Dorsolateral prefrontal cortex (tissue), 120 donors: ENCODE measurements at regions of chr7 and their contacts with region 1.

Region 1: DNA sequence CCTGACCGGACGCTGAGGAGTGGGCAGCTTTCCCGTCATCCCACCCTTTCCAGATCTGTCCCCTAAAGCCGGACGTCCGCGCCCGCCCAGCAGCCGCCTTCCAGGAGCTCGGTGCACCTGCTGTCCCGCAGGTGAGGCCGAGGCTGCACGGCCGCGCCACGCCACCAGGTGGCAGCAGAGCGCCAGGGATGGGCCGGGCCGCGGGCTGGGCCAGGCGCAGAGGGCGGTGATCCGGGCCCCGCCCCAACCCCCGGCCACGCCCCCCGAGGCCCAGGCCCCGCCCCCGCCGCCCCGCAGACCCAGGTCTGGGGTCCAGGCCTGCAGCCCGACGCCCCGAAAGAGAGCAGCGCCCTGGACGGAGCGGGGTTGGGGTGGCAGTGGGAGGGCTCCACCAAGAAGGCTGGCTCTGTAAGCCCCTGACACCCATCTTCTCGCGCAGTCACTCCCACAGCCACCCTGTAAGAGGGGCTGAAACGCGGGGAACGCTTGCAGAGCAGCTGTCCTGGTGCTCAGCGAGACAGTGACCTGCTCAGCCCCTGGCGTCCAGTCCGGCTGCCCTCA is 32.2 kb downstream of the FOXL3 start:
- DNase-seq: peak in 8 of 10 donors; percentile 57 to 87 (median 70)
- H3K4me3 ChIP-seq: peak overlapping the region in 22 of 59 donors; percentile 2 to 48 (median 29)
- H3K27ac ChIP-seq: no peak overlapping the region
- H3K27me3 ChIP-seq: peaks cover 0 to 29% (median 0%) of the 10 kb centered on the region in 45 donors
- CTCF ChIP-seq: peak; percentile 67 to 100 (median 96)

Region 2: GRCh38 chr7:284762-285722 is 37.1 kb before region 1 on chr7:
- intact Hi-C with region 1: no loop called
- DNase-seq: peak in 3 of 10 donors; percentile 17 to 36 (median 29)
- H3K4me3 ChIP-seq: no peak overlapping the region
- H3K27ac ChIP-seq: no peak overlapping the region
- H3K27me3 ChIP-seq: peaks cover 0 to 25% (median 13%) of the 10 kb centered on the region in 45 donors
- CTCF ChIP-seq: no peak

Region 3: DNA sequence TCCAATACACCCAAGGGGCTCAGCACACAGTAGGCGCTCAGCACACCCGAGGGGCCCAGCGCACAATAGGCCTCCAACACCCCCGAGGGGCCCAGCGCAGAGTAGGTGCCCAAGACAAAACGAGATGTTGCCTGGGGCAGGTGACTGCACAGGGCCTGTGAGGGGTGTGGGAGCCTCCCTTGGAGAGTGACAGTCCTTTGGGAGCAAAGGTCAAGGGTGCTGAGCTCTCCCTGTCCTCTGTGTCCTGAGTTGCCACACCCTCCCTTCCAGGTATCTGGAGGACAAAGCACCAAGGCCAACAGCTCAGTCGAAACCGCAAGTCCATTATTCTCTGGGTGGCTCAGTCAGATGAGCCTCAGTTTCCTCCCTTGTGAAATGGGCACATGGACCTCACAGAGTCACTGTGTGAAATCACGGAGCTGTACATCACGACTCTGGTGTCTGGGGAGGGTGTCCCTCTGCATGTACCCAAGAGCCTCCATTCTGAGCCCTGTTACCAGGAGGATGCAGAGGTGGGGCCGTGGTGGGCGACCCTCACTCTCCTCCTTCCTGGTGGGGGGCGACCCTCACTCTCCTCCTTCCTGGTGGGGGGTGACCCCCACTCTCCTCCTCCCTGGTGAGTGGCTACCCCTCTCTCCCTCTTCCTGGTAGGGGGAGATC is 49.1 kb after region 1 on chr7:
- intact Hi-C with region 1: no loop called
- DNase-seq: peak in 4 of 10 donors; percentile 14 to 27 (median 26)
- H3K4me3 ChIP-seq: no peak overlapping the region
- H3K27ac ChIP-seq: no peak overlapping the region
- H3K27me3 ChIP-seq: peaks cover 0 to 8% (median 0%) of the 10 kb centered on the region in 45 donors
- CTCF ChIP-seq: no peak

Region 4: DNA sequence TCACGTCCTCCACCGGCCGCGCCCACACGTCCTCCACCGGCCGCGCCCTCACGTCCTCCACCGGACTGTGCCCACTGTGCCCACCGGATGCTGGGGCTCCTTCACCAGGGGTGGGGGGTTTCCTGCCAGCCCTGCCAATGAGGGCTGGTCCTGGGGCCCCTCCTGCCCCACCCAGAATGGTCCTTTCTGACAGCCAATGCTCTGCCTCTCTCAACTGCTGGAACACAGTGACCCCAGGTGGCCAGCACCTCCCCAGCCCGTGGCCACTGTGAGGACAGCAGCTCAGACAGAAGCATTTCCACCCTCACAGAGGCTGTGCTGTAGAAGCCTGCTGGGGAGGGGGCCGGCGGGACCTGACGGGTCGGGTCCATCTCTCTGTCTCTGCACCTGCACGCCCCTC is 314.2 kb after region 1 on chr7:
- intact Hi-C with region 1: loop called (anchors 1 to 5 kb)
- DNase-seq: peak in 6 of 10 donors; percentile 49 to 70 (median 55)
- H3K4me3 ChIP-seq: peak overlapping the region in 1 of 59 donors; percentile 16
- H3K27ac ChIP-seq: no peak overlapping the region
- H3K27me3 ChIP-seq: no peaks in the 10 kb centered on the region
- CTCF ChIP-seq: peak in 54 of 56 donors; percentile 17 to 71 (median 56)

Region 5: GRCh38 chr7:768881-769504 is 446.8 kb after region 1 on chr7:
- intact Hi-C with region 1: loop called (anchors 1 to 2 kb)
- DNase-seq: peak in 6 of 10 donors; percentile 28 to 82 (median 51)
- H3K4me3 ChIP-seq: peak overlapping the region in 49 of 59 donors; percentile 7 to 52 (median 34)
- H3K27ac ChIP-seq: peak overlapping the region in 42 of 59 donors; percentile 4 to 83 (median 58)
- H3K27me3 ChIP-seq: no peaks in the 10 kb centered on the region
- CTCF ChIP-seq: no peak

Region 6: DNA sequence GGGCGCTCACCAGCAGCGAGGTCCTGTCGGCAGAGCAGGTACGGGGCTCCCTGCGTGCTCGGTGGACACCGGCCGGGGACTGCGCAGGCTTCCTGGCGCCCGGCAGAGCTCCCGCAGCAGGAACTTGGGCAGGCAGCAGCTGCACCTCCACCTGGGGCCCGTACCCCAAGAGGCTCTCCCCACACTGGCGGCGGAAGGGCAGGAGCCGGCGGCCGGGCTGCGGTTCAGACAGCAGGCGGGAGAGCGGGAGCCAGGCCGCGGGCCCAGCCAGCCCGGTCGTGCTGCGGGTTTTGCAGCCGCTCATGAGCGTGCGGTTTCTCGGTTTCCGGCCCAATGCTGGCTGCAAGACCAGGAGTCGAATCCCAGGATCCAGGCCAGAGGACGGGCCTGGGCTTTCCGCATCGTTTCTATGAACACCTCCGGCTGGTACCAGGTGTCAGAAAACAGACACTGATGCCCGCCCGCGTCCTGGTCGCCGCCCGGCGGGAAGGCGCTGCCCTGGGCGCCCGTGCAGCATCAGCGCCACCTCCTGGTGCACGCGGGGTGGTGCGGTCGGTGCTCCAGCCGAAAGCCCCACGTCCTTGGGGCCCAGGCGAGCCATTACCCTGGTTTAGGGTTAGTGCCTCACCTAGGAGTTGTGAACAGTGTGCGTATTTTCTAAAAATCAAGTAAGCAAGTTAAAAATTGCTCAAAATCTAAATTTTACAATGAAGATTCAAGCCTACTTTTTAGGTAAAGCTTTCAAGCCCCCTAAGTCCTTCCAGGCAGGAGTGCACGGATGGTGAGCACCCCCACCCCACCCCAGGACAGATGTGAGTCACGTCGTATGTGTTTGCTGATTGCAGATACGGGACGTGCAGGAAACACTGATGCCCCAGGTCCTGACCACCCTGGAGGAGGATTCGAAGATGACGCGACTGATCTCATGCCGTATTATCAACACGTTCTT is 452.2 kb after region 1 on chr7:
- intact Hi-C with region 1: loop called (anchors 1 to 2 kb)
- DNase-seq: peak in 9 of 10 donors; percentile 49 to 87 (median 60)
- H3K4me3 ChIP-seq: peak overlapping the region in 10 of 59 donors; percentile 10 to 36 (median 20)
- H3K27ac ChIP-seq: peak overlapping the region in 7 of 59 donors; percentile 20 to 83 (median 29)
- H3K27me3 ChIP-seq: no peaks in the 10 kb centered on the region
- CTCF ChIP-seq: peak; percentile 62 to 97 (median 90)

Region 7: GRCh38 chr7:876167-876967 is 554.2 kb after region 1 on chr7 and contains the start of gene GET4:
- intact Hi-C with region 1: loop called (anchors 2 kb)
- DNase-seq: peak; percentile 97 to 100 (median 98)
- H3K4me3 ChIP-seq: peak within 1 kb of the TSS; percentile 50 to 92 (median 80)
- H3K27ac ChIP-seq: peak within 1 kb of the TSS; percentile 74 to 97 (median 93)
- H3K27me3 ChIP-seq: no peaks in the 10 kb centered on the region
- CTCF ChIP-seq: peak in 47 of 56 donors; percentile 0 to 65 (median 47)
- total RNA-seq, gene GET4: 25.4 to 54.1 (median 40.7) TPM

Region 8: DNA sequence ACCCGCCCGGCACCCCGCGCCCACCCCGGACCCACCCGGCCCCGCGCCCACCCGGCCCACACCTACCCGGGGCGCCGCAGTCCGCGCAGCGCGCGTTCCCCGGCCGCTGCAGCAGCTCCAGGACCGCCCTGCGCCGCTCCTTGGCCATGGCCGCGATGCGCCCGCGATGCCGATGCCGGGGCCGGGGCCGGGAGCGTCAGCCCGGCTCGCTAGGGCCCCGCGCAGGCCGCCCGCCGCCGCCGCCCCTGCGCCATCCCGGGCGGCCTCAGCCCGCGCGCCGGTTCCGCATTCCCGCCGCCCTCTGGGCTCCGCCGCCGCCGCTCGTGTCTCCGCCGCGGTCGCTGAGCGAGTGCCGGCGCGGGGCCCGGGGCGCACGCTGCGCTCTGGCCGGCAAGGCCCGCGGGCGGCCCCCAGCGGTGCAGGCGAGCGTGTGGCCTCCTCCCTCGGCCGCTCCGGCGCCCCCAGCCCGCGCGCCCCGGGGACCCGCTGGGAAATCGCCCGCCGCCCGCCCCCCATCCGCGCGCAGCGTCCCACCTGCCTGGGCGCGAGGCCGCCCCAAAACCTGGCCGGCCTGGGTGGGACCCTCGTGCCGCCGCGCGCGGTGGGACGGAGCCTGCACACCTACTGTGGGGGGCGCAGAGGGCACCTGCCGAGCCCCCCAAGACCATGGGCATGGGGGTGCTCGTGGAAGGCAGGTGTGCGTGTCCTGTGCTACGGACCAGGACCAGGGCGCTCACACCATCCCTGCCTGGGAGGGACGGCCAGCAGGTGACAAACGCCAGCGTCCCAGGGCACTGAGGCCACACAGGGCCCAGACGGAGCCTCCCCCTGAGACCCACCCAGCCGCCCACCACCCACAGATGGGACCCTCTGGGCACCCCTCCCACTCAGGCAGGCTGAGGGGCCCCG is 632.4 kb after region 1 on chr7 and contains the start of gene ADAP1:
- intact Hi-C with region 1: loop called in 1 of 2 experiments (anchors 10 kb)
- DNase-seq: peak in 4 of 10 donors; percentile 52 to 78 (median 60)
- H3K4me3 ChIP-seq: peak within 1 kb of the TSS; percentile 49 to 90 (median 80)
- H3K27ac ChIP-seq: peak within 1 kb of the TSS in 58 of 59 donors; percentile 55 to 98 (median 93)
- H3K27me3 ChIP-seq: no peaks in the 10 kb centered on the region
- CTCF ChIP-seq: peak in 28 of 56 donors; percentile 7 to 60 (median 32)
- total RNA-seq, gene ADAP1: 97.0 to 199 (median 136) TPM